Heart right ventricle (tissue), 16 donors: ENCODE measurements at regions of chr2 and their contacts with region 1.

Region 1: GRCh38 chr2:61928826-61929461 is 23.5 kb downstream of the COMMD1 start:
- DNase-seq: no peak
- ATAC-seq: peak in 5 of 8 donors; percentile 63 to 86 (median 80)
- H3K4me3 ChIP-seq: no peak overlapping the region
- H3K27ac ChIP-seq: peak overlapping the region in 6 of 10 donors; percentile 10 to 81 (median 71)
- H3K4me1 ChIP-seq: peaks cover 0 to 17% (median 5%) of the 10 kb centered on the region in 9 donors
- H3K27me3 ChIP-seq: no peaks in the 10 kb centered on the region
- CTCF ChIP-seq: no peak

Region 2: DNA sequence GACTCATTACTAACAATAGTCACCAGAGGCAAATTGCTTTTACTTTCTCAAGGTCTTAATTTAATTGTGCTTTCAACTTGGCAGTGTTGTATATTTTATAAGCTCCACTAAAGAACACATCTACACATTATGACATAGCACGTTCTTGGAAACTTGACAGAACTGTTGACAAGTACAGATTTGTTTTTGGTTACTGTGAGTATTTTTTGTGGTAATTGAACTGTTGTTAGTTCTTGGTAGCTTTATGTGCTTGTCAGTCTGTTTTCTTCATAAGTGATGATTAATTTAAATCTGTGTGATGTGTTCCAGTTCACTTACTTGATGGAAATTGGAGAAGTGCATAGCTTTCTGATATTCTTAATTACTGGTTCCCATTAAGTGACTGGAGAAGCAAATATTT is 40.4 kb after region 1 on chr2:
- intact Hi-C with region 1: loop called in 2 of 10 experiments (anchors 5 to 10 kb)
- DNase-seq: no peak
- ATAC-seq: no peak
- H3K4me3 ChIP-seq: no peak overlapping the region
- H3K27ac ChIP-seq: peak overlapping the region in 3 of 10 donors; percentile 4 to 11 (median 8)
- H3K4me1 ChIP-seq: peaks cover 0 to 28% (median 19%) of the 10 kb centered on the region in 9 donors
- H3K27me3 ChIP-seq: no peaks in the 10 kb centered on the region
- CTCF ChIP-seq: no peak

Region 3: GRCh38 chr2:61978522-61978921 is 49.6 kb after region 1 on chr2:
- intact Hi-C with region 1: loop called in 1 of 10 experiments (anchors 10 kb)
- DNase-seq: peak in 1 of 2 donors; percentile 72
- ATAC-seq: peak; percentile 90 to 97 (median 93)
- H3K4me3 ChIP-seq: no peak overlapping the region
- H3K27ac ChIP-seq: peak overlapping the region in 7 of 10 donors; percentile 33 to 71 (median 53)
- H3K4me1 ChIP-seq: peaks cover 0 to 27% (median 14%) of the 10 kb centered on the region in 9 donors
- H3K27me3 ChIP-seq: no peaks in the 10 kb centered on the region
- CTCF ChIP-seq: no peak

Region 4: DNA sequence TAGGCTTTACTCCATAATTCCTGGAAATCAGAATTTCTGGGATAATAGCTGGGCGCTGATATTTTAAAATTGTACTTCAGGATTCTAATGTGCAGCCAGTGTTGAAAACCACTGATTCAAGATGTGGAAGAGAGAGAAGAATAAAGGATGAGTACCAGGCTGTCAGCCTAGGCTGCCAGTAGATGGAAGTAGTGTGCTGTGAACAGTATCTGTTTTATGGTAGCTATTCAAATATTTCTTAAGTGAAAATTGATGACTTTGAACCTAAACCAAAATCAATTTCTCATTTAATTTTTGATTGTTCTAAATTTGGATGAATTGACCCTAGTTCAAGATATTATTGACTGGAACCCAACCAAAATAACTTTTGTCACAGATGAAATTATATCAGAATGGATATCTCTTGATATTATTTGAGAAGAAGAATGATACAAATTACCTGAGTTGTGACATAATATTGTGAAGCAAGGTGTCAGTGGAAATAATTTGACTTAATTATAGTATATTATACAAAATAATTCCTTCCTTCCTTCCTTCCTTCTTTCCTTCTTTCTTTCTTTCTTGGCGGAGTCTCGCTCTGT is 64.6 kb after region 1 on chr2:
- intact Hi-C with region 1: loop called in 1 of 10 experiments (anchors 10 kb)
- DNase-seq: peak in 1 of 2 donors; percentile 34
- ATAC-seq: peak in 7 of 8 donors; percentile 49 to 84 (median 74)
- H3K4me3 ChIP-seq: no peak overlapping the region
- H3K27ac ChIP-seq: no peak overlapping the region
- H3K4me1 ChIP-seq: peaks cover 0 to 35% (median 19%) of the 10 kb centered on the region in 9 donors
- H3K27me3 ChIP-seq: no peaks in the 10 kb centered on the region
- CTCF ChIP-seq: peak; percentile 37 to 87 (median 70)